Calu3 (cell line): ENCODE measurements at regions of chr2 and their contacts with region 1.

Region 1: GRCh38 chr2:212686285-212686895 is 147.8 kb upstream of the ERBB4 start:
- DNase-seq: peak; percentile 54
- H3K4me3 Mint-ChIP-seq: no peak overlapping the region
- H3K27ac Mint-ChIP-seq: no peak overlapping the region
- H3K4me1 Mint-ChIP-seq: peaks cover 13% of the 10 kb centered on the region
- H3K27me3 Mint-ChIP-seq: no peaks in the 10 kb centered on the region
- CTCF ChIP-seq: peak; percentile 86

Region 2: DNA sequence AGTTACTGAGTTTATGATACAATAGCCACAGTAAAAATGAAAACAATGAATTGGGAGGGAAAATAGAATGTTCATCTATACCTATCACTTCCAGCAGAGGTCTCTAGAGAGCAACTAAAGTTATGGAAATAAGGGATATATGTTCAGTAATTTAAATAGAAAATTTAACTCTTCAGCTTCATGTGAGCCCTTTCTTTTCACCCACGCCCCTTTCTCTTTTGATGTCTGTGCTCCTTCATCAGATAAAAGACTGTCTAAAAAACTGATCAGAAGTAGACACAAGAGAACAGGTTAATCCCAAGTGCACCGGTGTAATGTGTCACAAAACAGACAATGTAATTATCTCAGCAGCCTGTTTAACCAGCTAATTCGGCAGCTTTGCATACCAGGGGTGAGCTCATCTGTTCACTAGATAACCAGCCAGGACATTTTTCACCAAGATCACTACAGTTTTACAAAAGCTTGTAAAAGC is 90.7 kb after region 1 on chr2:
- CTCF ChIA-PET with region 1: no interaction called
- intact Hi-C with region 1: loop called (anchors 5 kb)
- DNase-seq: peak; percentile 3
- H3K4me3 Mint-ChIP-seq: no peak overlapping the region
- H3K27ac Mint-ChIP-seq: no peak overlapping the region
- H3K4me1 Mint-ChIP-seq: no peaks in the 10 kb centered on the region
- H3K27me3 Mint-ChIP-seq: no peaks in the 10 kb centered on the region
- CTCF ChIP-seq: peak; percentile 25

Region 3: GRCh38 chr2:212832211-212833195 is 146.1 kb after region 1 on chr2:
- CTCF ChIA-PET with region 1: no interaction called
- intact Hi-C with region 1: no loop called
- DNase-seq: no peak
- H3K4me3 Mint-ChIP-seq: no peak overlapping the region
- H3K27ac Mint-ChIP-seq: no peak overlapping the region
- H3K4me1 Mint-ChIP-seq: no peaks in the 10 kb centered on the region
- H3K27me3 Mint-ChIP-seq: no peaks in the 10 kb centered on the region
- CTCF ChIP-seq: no peak

Region 4: DNA sequence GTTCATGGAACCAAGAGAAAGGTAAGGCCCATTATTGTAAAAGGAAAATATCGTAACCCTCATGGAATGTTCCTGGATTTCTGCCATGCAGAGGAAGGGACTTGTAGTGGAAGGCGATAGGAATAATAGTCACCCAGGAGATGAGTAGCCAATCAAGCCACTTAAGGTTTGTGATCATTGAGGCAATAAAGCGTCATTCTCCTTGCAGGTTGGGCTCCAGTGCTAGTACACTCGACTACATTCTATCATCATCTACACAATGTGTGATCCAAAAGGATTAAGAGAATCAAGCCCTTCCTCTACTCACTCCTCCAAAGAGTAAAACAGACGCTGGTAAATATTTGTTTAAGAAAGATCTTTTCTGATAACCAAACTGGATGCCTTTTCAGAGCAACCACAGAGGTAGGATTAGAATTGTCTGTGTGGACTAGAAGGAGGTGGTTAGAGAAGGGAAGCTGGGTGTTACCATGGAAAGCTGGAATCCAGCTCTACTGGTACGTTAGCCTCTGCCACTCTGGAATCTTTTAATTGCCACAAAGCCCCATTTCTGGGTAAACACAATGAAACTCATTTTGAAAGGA is 219.3 kb after region 1 on chr2:
- CTCF ChIA-PET with region 1: no interaction called
- intact Hi-C with region 1: loop called (anchors 5 kb)
- DNase-seq: peak; percentile 49
- H3K4me3 Mint-ChIP-seq: peak overlapping the region; percentile 59
- H3K27ac Mint-ChIP-seq: peak overlapping the region; percentile 98
- H3K4me1 Mint-ChIP-seq: peaks cover 51% of the 10 kb centered on the region
- H3K27me3 Mint-ChIP-seq: no peaks in the 10 kb centered on the region
- CTCF ChIP-seq: no peak